Activated B cell treated with CpG ODN at 0.5 μM for 24 hours (primary cell): ENCODE measurements at regions of chr11 and their contacts with region 1.

Region 1: DNA sequence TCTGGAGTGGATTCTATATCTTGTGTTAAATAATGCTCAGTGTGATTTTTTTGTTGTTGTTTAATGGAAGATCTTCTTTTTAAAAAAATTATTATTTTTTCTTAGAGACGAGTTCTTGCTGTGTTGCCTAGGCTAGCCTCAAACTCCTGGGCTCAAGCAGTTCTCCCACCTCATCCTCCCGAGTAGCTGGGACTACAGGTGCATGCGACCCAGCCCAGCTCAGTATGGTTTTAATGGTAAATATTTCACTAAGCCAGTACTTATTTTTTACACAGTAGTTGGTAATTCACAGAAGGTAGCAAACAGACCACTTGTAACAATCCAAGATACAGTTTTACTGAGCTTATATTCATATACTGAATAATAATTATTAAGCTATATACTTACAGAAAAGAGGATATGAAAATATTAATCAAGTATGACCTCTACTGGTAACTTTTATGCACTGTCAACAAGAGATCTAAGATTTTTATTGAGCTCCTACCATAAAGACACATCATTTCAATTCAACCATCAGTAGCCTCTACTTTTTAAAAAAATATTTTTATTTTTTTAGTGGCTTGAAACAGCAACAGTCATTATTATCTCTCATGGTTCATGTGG is 6.1 kb upstream of the CD59 start:
- DNase-seq: no peak
- ATAC-seq: peak; percentile 65
- H3K4me3 Mint-ChIP-seq: no peak overlapping the region
- H3K27ac Mint-ChIP-seq: no peak overlapping the region
- H3K4me1 Mint-ChIP-seq: no peaks in the 10 kb centered on the region
- H3K27me3 Mint-ChIP-seq: no peaks in the 10 kb centered on the region
- CTCF ChIP-seq: no peak

Region 2: GRCh38 chr11:33542921-33543320 is 199.4 kb before region 1 on chr11:
- CTCF ChIA-PET with region 1: interaction called, 61 read pairs
- POLR2A ChIA-PET with region 1: no interaction called
- intact Hi-C with region 1: loop called (anchors 1 kb)
- DNase-seq: peak; percentile 20
- ATAC-seq: no peak
- H3K4me3 Mint-ChIP-seq: no peak overlapping the region
- H3K27ac Mint-ChIP-seq: no peak overlapping the region
- H3K4me1 Mint-ChIP-seq: no peaks in the 10 kb centered on the region
- H3K27me3 Mint-ChIP-seq: peaks cover 11% of the 10 kb centered on the region
- CTCF ChIP-seq: no peak

Region 3: GRCh38 chr11:33716236-33716635 is 26.1 kb before region 1 on chr11:
- CTCF ChIA-PET with region 1: interaction called, 81 read pairs
- POLR2A ChIA-PET with region 1: interaction called, 3 read pairs
- intact Hi-C with region 1: loop called (anchors 1 kb)
- DNase-seq: no peak
- ATAC-seq: no peak
- H3K4me3 Mint-ChIP-seq: no peak overlapping the region
- H3K27ac Mint-ChIP-seq: no peak overlapping the region
- H3K4me1 Mint-ChIP-seq: no peaks in the 10 kb centered on the region
- H3K27me3 Mint-ChIP-seq: no peaks in the 10 kb centered on the region
- CTCF ChIP-seq: no peak

Region 4: GRCh38 chr11:33722579-33723225 is 19.6 kb before region 1 on chr11:
- CTCF ChIA-PET with region 1: interaction called, 81 read pairs
- POLR2A ChIA-PET with region 1: no interaction called
- intact Hi-C with region 1: no loop called
- DNase-seq: no peak
- ATAC-seq: peak; percentile 18
- H3K4me3 Mint-ChIP-seq: no peak overlapping the region
- H3K27ac Mint-ChIP-seq: no peak overlapping the region
- H3K4me1 Mint-ChIP-seq: peaks cover 30% of the 10 kb centered on the region
- H3K27me3 Mint-ChIP-seq: no peaks in the 10 kb centered on the region
- CTCF ChIP-seq: no peak

Region 5: DNA sequence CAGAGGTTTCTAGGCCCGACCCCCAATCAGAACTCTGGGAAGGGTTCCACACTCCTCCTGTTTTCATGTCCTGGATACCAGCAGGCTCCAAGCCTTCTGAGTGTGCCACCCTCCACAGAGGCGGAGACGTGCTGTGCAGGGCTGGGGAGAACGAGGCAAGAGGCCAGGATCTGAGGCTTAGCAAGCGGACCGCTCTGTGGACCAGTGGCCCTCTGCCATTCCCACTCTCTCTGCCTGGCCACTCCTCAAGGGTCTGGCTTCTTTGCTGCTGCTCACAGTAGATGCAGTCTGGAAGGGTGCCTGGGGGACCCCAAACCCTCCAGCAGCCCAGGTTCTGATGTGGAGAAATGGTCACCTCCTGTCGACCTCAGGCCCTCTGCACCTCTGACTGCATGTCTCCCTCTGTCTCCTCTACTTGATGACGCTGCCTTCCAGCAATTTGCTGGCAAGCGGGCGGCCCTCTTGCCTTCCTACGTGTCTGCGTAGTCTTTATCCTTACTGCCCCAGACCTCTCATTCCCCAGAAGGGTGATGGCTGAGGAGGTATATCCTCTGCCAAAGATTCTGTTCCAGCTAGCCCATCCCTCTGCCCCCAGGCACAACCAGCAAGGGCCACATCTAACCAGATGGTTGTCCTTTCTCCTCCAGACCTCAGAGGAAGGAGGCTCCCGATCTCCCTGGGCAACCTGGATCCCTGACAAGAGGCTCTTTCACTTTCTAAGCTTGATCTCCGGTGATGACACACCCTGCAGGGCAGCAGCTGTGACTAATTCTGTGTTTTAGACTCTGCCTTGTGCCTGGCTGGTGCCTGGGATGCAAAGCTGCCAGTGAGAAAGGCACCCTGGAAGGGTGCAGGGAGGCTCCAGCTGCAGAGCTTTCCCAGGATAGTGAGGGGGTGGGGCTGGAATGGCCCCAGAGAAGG is 450.4 kb after region 1 on chr11:
- CTCF ChIA-PET with region 1: no interaction called
- POLR2A ChIA-PET with region 1: no interaction called
- intact Hi-C with region 1: no loop called
- DNase-seq: no peak
- ATAC-seq: no peak
- H3K4me3 Mint-ChIP-seq: no peak overlapping the region
- H3K27ac Mint-ChIP-seq: peak overlapping the region; percentile 50
- H3K4me1 Mint-ChIP-seq: peaks cover 6% of the 10 kb centered on the region
- H3K27me3 Mint-ChIP-seq: no peaks in the 10 kb centered on the region
- CTCF ChIP-seq: no peak